Activated CD4-positive, alpha-beta T cell treated with anti-CD3 and anti-CD28 coated beads for 36 hours (primary cell): ENCODE measurements at regions of chr17 and their contacts with region 1.

Region 1: DNA sequence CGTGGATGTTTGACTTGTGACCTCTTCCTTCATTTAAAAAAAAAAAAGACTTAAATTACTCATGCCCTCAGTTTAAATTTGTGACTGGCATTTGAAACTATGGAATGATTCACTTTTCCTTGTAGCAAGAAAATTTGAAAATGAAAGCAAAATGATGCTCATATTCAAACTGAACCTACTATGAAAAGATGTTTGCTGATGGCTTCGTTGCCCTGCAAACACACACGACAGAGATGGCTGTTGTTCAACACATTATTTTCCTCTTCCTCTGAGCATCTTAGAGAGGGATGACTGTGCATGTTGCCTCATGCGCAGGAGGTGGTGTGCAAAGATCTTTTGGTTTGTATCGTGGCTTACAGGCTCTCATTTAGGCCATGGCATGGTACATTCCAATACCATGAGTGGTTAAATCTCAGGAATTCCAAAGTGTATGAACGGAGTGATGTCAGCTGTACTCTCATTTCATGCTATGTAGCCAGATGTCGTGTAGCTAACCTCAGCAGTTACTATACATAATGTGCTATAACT is 164.5 kb downstream of the PRKCA start:
- DNase-seq: peak; percentile 85
- ATAC-seq: peak; percentile 91
- H3K4me3 Mint-ChIP-seq: peak overlapping the region; percentile 36
- H3K27ac Mint-ChIP-seq: peak overlapping the region; percentile 92
- H3K4me1 Mint-ChIP-seq: peaks cover 81% of the 10 kb centered on the region
- H3K27me3 Mint-ChIP-seq: no peaks in the 10 kb centered on the region

Region 2: DNA sequence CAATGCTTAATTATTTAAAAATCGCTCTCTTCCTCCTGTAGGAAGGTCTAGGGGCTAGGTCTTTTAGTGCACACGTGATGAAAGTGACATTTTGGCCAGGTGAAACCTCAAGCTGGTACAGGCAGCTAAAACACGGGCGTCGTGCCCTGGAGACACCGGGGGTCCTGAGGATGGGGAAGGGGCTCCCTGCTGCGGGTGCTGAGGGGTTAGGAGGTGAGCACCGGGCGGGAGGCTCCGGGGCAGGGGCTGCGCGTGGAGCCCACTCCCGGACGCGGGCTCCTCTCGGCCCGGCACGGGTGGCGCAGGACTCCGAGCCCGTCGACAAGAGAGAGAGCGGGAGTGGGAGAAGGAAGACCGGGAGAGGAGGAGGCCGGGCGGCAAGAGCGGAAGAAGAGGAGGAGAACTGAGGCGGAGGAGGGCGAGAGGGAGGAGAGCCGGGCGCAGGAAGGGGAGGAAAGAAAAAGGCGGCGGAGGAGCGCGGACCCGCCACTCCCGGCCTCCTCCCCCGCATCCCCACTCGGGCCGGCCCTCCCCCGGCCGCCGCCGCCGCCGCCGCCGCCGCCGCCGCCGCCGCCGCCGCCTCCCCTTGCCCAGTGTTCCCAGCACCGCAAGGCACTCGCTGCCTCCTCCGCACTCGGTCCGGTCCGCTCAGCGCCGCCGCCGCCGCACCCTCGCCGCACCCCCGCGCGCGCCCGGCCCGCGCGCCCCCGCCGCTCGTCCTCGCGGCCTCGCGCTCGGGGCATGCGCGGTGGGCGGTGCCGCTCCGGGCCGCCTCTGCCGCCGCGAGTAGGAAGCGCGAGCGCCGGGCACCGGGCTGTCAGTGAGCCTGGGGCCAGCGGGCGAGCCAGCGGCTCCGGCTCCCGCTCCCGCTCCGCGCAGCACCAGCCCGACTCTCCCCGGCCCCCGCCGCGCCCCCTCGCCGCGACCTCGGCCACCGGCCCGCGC is 164.8 kb before region 1 on chr17 and contains the start of gene PRKCA:
- CTCF ChIA-PET with region 1: interaction called, 3 read pairs
- POLR2A ChIA-PET with region 1: no interaction called
- intact Hi-C with region 1: loop called (anchors 1 kb)
- DNase-seq: peak; percentile 85
- ATAC-seq: peak; percentile 59
- H3K4me3 Mint-ChIP-seq: peak within 1 kb of the TSS; percentile 97
- H3K27ac Mint-ChIP-seq: peak within 1 kb of the TSS; percentile 100
- H3K4me1 Mint-ChIP-seq: peaks cover 42% of the 10 kb centered on the region
- H3K27me3 Mint-ChIP-seq: no peaks in the 10 kb centered on the region
- total RNA-seq, gene PRKCA: 73.3 to 77.0 TPM

Region 3: DNA sequence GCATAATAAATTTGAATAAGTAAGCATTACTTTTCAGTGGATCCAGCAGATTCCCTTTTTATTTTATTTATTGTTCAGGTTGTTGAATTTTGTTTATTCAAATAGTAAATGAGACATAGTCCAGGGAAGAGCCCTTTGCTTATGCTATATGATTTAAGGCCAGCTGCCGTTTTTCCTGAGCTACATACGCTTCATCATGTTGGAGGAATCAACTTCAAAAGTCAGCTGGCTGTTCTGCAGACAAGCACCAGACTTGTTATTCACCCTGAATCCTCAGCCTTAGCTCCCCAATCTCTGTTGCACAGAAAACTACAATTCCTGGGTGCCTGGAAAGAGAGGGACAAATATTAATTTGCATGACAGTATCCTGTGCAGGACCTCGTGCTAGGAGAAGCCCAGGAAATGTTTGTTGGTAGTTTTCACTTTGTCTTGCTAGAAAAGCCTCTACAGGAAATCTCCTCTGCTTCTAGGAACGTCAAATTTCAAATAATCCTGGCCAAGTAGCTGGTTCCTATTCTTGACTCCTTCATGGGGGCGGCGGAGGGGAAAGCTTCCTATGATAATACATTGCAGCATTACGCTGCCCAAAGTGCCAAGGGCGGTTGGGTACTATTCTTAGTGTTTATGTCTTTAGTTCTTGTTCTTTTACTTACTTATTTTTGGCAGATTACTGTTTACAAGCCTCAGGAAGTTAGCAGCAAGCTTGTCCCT is 62.9 kb before region 1 on chr17:
- CTCF ChIA-PET with region 1: no interaction called
- POLR2A ChIA-PET with region 1: no interaction called
- intact Hi-C with region 1: loop called (anchors 1 to 2 kb)
- DNase-seq: no peak
- ATAC-seq: no peak
- H3K4me3 Mint-ChIP-seq: no peak overlapping the region
- H3K27ac Mint-ChIP-seq: peak overlapping the region; percentile 9
- H3K4me1 Mint-ChIP-seq: peaks cover 87% of the 10 kb centered on the region
- H3K27me3 Mint-ChIP-seq: no peaks in the 10 kb centered on the region

Region 4: GRCh38 chr17:66431910-66432683 is 34.8 kb before region 1 on chr17:
- CTCF ChIA-PET with region 1: no interaction called
- POLR2A ChIA-PET with region 1: no interaction called
- intact Hi-C with region 1: no loop called
- DNase-seq: no peak
- ATAC-seq: no peak
- H3K4me3 Mint-ChIP-seq: no peak overlapping the region
- H3K27ac Mint-ChIP-seq: no peak overlapping the region
- H3K4me1 Mint-ChIP-seq: peaks cover 46% of the 10 kb centered on the region
- H3K27me3 Mint-ChIP-seq: no peaks in the 10 kb centered on the region

Region 5: GRCh38 chr17:66514227-66514806 is 47.4 kb after region 1 on chr17:
- CTCF ChIA-PET with region 1: interaction called, 5 read pairs
- POLR2A ChIA-PET with region 1: no interaction called
- intact Hi-C with region 1: loop called (anchors 1 kb)
- DNase-seq: peak; percentile 55
- ATAC-seq: peak; percentile 85
- H3K4me3 Mint-ChIP-seq: no peak overlapping the region
- H3K27ac Mint-ChIP-seq: peak overlapping the region; percentile 74
- H3K4me1 Mint-ChIP-seq: peaks cover 87% of the 10 kb centered on the region
- H3K27me3 Mint-ChIP-seq: no peaks in the 10 kb centered on the region

Region 6: DNA sequence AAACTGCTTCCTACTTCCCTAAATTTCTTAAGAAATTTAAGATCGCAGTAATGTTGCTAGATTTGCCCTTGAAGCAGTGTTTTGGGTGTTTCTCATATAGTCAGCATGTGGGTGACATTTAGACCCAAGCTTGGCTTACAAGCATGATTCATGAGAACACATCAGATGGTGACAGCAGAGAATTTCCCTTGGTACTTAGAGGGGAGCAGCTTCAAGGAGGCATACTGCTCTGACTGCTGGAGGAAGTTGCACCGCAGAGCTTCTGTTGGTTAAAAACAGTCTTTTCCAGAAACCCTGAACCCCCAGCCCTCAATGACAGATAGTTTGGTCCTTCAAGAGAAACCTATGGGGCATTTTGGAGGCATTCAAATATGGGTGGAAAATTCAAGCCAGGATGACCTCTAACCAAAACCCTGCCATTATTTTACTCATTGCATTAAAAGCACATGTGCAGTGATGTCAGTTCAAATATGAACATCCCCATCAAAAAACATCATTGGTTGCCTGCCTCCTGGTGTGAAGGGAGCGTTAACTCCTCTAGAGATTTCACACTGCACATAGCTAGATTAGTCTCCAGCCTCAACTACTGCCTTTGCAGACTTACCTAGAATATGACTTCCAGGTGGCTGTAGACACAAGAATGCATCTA is 166.5 kb after region 1 on chr17:
- CTCF ChIA-PET with region 1: no interaction called
- POLR2A ChIA-PET with region 1: no interaction called
- intact Hi-C with region 1: loop called (anchors 1 to 10 kb)
- DNase-seq: peak; percentile 73
- ATAC-seq: peak; percentile 98
- H3K4me3 Mint-ChIP-seq: no peak overlapping the region
- H3K27ac Mint-ChIP-seq: peak overlapping the region; percentile 78
- H3K4me1 Mint-ChIP-seq: peaks cover 66% of the 10 kb centered on the region
- H3K27me3 Mint-ChIP-seq: no peaks in the 10 kb centered on the region